GM18951 (cell line): ENCODE measurements at regions of chr11 and their contacts with region 1.

Region 1: GRCh38 chr11:63478896-63479295 is 12.1 kb downstream of the PLAAT5 start:
- POLR2A ChIP-seq: no peak

Region 2: GRCh38 chr11:62865639-62866038 is 613.3 kb before region 1 on chr11:
- in situ Hi-C with region 1: no loop called
- POLR2A ChIP-seq: no peak

Region 3: GRCh38 chr11:63635762-63636465 is 157.0 kb after region 1 on chr11:
- in situ Hi-C with region 1: loop called (anchors 5 kb)
- POLR2A ChIP-seq: no peak

Region 4: DNA sequence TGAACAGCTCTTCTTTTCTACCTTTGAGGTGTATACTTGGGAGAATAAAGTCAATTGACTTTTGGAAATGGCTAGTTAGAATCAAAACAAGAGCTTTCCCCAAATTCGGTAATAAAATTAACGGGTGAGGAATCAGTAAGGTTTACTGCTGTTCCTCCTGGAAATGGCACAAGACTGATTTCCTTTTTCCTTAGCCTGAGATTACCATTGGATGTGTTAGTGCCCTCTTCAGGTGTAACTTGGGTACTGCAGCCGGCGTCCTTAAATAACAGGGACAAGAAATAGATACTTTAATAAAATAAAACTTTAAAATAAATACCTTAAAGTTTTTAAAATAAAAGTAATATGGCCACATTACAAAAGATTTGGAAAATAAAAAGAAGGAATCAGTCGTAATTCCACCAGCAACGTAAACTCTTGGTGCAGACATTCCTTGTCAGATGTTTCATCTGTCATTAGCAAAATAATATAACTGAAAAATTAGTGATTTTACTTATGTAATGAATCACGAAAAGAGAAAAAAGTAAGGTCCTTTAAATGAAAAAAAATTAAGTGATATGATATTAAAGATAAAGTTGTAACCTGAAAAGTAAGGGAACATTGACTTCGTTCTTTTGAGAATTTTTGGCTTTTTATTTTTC is 259.9 kb after region 1 on chr11:
- in situ Hi-C with region 1: loop called (anchors 25 kb)
- POLR2A ChIP-seq: no peak

Region 5: GRCh38 chr11:63945477-63946163 is 466.7 kb after region 1 on chr11:
- in situ Hi-C with region 1: no loop called
- POLR2A ChIP-seq: no peak